Endothelial cell of umbilical vein (primary cell): ENCODE measurements at regions of chr1 and their contacts with region 1.

Region 1: DNA sequence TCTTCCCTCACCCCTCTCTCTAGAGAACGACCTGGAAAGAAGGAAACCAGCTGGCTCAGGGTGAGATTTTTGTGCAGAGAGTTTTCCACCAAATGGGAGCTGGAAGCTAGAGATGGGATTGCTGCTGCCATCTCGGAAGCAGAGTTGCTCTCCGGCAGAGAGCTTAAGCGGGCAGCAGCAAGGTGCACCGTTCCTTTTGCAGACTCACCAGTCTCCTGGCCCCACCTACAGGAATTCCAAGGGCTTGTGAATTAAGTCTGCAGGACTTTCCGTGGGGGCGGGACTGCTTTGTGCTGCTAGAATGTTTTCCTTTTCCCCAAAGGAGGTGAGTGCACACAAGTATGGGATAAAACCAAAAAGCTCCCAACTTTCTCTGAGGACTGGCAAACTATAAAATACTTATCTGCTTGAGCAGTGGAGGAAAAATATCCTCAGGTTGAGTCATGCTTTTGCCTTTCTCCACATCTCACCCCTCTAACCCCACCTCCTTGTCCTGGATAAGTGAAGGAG is 29.1 kb upstream of the KIAA0040 start:
- DNase-seq: peak; percentile 43
- H3K4me3 ChIP-seq: no peak overlapping the region
- H3K27ac ChIP-seq: no peak overlapping the region
- H3K4me1 ChIP-seq: peaks cover 7% of the 10 kb centered on the region
- H3K27me3 ChIP-seq: no peaks in the 10 kb centered on the region
- CTCF ChIP-seq: peak; percentile 7 to 12
- POLR2A ChIP-seq: no peak

Region 2: DNA sequence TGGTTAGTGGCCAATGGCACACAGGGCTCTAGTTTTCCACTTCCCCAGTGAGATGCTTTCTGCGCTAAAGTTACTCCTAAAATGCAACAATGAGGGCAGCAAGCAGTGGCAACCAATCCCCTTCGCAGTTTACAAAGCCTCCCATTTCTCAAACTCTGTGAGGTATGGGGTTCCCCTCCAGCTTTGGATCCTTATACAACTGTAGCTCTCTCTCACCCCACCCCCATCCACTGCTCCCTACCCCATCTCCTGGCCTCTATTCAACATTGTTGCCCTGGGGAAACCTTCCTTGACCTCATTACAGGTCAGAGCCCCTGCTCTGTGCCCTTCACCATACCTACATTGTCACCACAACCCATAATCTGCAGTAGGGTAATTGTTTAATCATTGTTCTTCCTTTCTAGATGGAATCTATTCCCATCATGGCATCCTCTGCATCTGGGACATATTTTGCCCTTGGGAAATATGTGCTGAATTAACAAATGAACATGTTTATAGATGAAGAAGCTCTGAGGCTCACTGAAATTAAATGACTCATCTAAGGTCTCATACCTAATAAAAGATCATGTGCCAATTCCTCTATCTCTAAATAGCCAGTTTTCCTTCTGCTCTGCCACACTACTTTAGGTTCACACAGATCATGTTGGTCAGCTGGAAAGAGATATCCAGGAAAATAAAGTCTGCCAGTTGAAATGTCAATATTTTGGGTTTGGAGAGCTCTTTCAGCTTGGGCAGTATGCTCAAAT is 41.7 kb before region 1 on chr1:
- CTCF ChIA-PET with region 1: no interaction called
- POLR2A ChIA-PET with region 1: no interaction called
- dilution Hi-C with region 1: no loop called
- intact Hi-C with region 1: no loop called
- DNase-seq: no peak
- H3K4me3 ChIP-seq: no peak overlapping the region
- H3K27ac ChIP-seq: no peak overlapping the region
- H3K4me1 ChIP-seq: no peaks in the 10 kb centered on the region
- H3K27me3 ChIP-seq: no peaks in the 10 kb centered on the region
- CTCF ChIP-seq: no peak
- POLR2A ChIP-seq: no peak

Region 3: DNA sequence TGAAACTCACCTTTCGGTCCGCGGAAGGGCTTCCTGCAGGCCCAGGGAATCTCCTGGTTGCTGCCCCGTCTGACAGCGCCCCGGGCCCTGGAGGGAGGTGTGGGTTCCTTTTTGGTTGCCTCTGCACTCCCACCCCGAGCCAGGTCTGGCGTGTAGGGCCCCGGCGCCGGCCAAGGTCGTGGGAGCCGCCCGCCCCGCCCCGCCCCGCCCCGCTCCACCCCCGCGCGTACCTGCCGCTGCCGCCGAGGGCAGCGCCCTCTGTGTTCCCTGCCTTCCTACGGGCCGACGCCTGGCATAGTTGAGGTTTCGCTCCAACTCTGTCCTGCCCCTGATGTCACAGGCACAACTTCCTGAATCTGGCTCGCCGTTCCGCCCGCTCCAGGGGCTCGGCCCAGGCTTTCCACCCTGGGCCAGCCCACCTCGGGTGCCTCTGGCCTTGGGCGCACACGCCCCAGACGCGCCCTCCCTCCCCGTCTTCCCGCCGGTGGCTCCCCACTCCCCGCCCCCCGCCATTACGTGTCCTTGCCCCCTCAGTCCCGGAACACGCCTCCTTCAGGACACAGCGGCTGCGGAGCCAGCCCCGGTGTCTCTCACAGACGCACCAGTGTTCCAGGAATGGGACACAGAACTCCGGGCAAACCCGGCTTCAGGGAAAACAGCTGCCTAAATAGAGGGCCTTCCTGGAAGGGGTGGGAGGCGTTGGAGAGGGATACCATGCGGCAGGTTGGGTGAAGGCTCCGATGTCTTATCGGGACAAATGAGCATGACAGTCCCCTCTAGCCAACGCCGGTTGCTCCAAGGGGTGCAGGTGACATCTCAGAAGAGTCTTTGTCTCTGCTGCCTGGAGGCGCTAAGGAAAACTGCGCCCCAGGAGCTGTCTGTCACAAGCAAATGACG is 28.8 kb before region 1 on chr1 and contains the start of gene KIAA0040:
- CTCF ChIA-PET with region 1: interaction called, 5 read pairs
- POLR2A ChIA-PET with region 1: no interaction called
- dilution Hi-C with region 1: no loop called
- intact Hi-C with region 1: loop called (anchors 1 kb)
- DNase-seq: peak; percentile 62
- H3K4me3 ChIP-seq: peak within 1 kb of the TSS; percentile 62 to 93 (median 87)
- H3K27ac ChIP-seq: peak within 1 kb of the TSS; percentile 75
- H3K4me1 ChIP-seq: peaks cover 20% of the 10 kb centered on the region
- H3K27me3 ChIP-seq: no peaks in the 10 kb centered on the region
- CTCF ChIP-seq: peak in 1 of 2 donors; percentile 24
- POLR2A ChIP-seq: no peak
- total RNA-seq, gene KIAA0040: 10.9 and 21.5 TPM in 2 replicates

Region 4: DNA sequence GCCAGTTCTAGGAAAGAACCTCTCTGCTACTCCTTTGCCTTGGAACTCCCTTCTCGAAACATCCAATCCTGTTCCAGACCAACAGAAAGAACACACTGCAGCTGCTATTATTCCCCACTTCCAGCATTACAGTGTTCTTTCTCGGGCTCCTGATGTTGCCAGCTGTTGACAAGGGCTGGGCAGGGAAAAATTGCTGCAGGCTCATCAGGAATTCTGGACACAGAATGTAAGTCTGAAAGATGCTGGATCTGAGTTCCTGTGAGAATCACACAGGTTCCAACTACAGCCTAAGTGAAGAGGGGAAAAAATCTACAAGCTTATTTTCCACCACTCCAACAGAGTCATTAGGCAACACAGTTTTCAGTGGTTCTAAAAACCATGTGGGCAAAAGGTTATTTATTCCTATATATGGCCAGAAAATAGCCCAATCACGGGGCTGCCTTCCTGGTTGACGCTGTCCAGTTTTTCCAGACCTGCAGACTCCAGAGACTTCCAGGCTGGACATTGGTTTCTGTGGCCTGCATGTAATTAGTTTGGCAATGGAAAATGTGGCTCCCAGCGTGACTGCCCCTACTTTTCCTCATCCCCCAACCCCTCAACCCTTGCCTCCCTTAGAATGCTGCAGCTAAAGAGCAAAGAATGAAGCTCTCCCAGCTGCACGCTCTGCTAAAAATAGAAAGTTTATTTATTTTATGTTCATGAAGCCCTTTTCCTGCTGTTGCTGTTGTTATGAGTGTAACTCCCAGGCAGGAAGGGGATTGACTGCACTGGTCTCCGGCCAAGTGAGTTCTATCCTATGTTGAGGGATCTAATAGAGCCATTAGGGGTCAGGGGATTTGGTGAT is 20.8 kb before region 1 on chr1:
- CTCF ChIA-PET with region 1: no interaction called
- POLR2A ChIA-PET with region 1: no interaction called
- dilution Hi-C with region 1: no loop called
- intact Hi-C with region 1: loop called (anchors 2 kb)
- DNase-seq: peak; percentile 91
- H3K4me3 ChIP-seq: no peak overlapping the region
- H3K27ac ChIP-seq: peak overlapping the region; percentile 85
- H3K4me1 ChIP-seq: peaks cover 42% of the 10 kb centered on the region
- H3K27me3 ChIP-seq: no peaks in the 10 kb centered on the region
- CTCF ChIP-seq: no peak
- POLR2A ChIP-seq: no peak

Region 5: DNA sequence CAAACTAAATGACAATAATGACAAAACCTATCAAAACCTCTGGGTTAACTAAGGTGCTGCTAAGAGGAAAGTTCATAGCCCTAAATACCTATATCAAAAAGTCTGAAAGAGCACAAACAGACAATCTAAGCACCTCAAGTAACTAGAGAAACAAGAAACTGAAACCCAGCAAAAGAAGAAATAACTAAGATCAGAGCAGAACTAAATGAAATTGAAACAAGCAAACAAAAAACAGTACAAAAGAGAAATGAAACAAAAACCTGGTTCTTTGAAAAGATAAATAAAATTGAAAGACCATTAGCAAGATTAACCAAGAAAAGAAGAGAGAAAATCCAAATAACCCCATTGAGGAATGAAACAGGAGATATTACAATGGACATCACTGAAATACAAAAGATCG is 15.7 kb after region 1 on chr1:
- CTCF ChIA-PET with region 1: no interaction called
- POLR2A ChIA-PET with region 1: no interaction called
- dilution Hi-C with region 1: no loop called
- intact Hi-C with region 1: no loop called
- DNase-seq: no peak
- H3K4me3 ChIP-seq: no peak overlapping the region
- H3K27ac ChIP-seq: no peak overlapping the region
- H3K4me1 ChIP-seq: no peaks in the 10 kb centered on the region
- H3K27me3 ChIP-seq: no peaks in the 10 kb centered on the region
- CTCF ChIP-seq: no peak
- POLR2A ChIP-seq: no peak